Activated naive CD4-positive, alpha-beta T cell treated with anti-CD3 and anti-CD28 coated beads, Interleukin-2, amount 10 ng/mL, durations not matched to agents 7 days and 5 days (primary cell): ENCODE measurements at regions of chr2 and their contacts with region 1.

Region 1: DNA sequence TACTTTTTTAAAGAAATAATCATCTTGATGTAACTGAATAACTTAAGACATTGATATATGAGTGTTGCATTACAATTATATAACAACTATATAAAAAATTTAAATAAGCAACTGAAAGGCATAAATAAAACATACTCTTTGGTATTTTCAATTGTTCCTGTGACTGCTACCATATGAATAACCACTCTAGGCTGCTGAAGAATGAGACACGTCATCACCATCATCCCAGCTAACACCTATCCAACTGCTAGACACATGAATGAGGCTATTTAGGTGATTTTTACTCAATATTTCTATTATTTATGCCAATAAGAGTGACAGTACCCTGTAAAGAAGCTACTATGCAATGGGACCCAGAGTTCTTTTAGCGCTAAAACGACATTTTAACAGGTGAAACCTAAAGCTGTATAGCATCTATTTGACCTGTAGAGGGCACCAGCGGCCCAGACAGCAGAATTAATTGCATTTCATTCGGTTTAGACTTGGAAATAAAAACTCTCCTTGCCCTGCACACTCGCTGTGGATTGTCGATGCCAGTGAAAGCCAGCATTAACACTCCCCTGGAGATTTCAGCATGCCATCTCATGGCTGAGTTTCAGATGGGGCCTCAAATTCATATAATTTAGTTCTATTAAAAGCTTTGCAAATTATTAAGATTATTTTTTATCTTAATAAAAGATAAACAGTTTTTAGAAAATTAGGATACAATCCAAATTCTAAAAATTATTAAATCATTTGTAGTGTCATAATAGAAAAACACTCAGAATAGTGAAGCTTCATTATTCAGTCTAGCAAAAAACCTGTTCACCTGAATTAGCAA is 89.4 kb upstream of the MAP2 start:
- DNase-seq: peak; percentile 56
- H3K4me3 Mint-ChIP-seq: no peak overlapping the region
- H3K27ac Mint-ChIP-seq: no peak overlapping the region
- H3K4me1 Mint-ChIP-seq: no peaks in the 10 kb centered on the region
- H3K27me3 Mint-ChIP-seq: no peaks in the 10 kb centered on the region

Region 2: GRCh38 chr2:209423562-209424198 is 89.3 kb after region 1 on chr2 and contains the start of gene MAP2:
- CTCF ChIA-PET with region 1: interaction called, 18 read pairs
- DNase-seq: peak; percentile 69
- H3K4me3 Mint-ChIP-seq: peak within 1 kb of the TSS; percentile 69
- H3K27ac Mint-ChIP-seq: no peak within 1 kb of the TSS
- H3K4me1 Mint-ChIP-seq: peaks cover 9% of the 10 kb centered on the region
- H3K27me3 Mint-ChIP-seq: peaks cover 19% of the 10 kb centered on the region

Region 3: DNA sequence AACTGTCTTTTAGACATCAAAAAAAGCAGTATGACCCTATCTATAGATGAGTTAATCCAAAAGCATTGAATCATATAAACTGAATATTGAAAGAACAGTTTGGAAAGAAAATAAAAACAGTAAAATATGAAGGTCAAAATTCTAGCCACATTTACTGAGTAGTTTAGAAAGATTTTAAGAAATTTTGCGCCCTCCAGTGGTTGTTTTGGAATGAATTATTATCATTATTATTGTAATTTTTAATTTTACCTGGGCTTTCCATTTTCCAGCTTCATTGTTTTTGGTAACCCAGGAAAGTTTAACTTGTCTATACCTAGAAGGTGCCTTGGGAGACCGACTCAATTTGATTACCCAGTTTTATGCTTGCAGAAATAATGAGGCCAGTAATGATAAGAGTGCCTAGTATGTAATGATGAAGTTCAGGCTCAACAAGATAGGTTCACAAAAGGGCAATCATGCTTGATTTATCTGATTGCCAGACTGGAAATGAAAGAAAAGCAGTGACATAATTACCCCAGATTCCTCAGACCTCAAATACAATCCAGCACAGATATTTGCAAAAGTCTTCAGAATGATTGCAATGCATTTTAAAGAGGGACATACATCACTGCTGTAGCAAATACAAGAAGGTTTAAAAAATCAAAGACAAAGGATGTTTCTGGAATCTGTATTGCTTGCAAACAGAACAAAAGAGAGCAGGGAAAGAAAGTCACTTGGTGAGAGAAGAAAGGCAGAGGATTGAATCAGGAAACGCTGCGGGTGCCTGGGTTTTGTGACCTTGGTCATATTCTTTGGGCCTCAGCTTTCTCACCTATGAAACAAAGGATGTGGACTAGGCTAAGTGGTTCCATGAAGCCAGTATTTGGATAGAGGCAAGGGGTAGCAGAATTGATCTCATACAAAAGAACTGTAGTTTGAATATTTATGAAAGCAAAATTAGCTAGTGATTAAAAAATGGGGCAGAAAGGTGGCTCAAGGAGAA is 243.3 kb after region 1 on chr2:
- CTCF ChIA-PET with region 1: interaction called, 14 read pairs
- DNase-seq: no peak
- H3K4me3 Mint-ChIP-seq: no peak overlapping the region
- H3K27ac Mint-ChIP-seq: no peak overlapping the region
- H3K4me1 Mint-ChIP-seq: peaks cover 4% of the 10 kb centered on the region
- H3K27me3 Mint-ChIP-seq: no peaks in the 10 kb centered on the region